ENCODE measurements at regions of chr11 and their contacts with region 1.

Region 1: DNA sequence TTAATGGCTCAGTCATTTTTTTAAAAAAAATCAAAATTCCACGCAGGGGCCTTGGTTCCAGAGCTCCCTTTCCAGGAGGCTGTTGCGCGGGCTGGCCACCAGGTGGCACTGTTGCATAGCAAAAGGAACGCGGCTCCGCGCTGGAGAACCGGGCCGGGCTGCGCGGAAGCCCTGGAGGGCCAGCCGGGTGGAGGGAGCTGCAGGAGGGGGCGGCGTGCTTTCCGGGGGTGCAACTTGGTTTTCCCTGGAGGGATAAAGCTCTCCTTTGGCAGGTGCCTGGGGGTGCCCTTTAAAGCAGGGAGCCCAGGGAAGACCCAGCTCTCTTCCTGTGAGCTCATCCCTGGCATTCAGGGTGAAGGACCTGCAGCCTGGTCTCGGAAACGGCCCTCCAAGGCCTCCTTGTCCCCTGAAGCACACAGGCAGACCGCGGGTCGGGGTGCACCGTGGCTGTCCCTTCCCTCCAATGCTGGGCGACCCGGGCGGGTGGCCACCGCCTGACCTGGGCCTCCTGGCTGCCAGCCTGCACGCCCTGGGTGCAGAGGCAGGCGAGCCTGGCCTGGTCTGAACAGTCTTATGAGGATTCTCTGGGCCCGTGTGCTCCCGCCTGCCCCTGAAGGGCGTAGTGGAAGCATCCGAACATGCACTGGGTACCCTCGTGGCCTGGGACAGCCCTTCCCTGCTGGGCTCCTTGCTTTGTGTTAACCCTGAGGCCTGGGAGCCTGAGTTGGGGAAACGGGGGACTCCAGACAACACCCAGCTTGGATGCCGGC is 23.4 kb downstream of the KRTAP5-5 start:
- H3K4me3 ChIP-seq: no peak overlapping the region
- H3K27ac ChIP-seq: no peak overlapping the region
- H3K4me1 ChIP-seq: no peaks in the 10 kb centered on the region
- CTCF ChIP-seq: peak; percentile 81

Region 2: GRCh38 chr11:1546536-1547400 is 106.2 kb before region 1 on chr11:
- CTCF ChIA-PET with region 1: interaction called, 16 read pairs
- POLR2A ChIA-PET with region 1: no interaction called
- H3K4me3 ChIP-seq: peak overlapping the region; percentile 36
- H3K27ac ChIP-seq: no peak overlapping the region
- H3K4me1 ChIP-seq: peaks cover 3% of the 10 kb centered on the region; the same call in 1 of the 2 replicates
- CTCF ChIP-seq: peak; percentile 46; the same call in 1 of the 2 replicates

Region 3: DNA sequence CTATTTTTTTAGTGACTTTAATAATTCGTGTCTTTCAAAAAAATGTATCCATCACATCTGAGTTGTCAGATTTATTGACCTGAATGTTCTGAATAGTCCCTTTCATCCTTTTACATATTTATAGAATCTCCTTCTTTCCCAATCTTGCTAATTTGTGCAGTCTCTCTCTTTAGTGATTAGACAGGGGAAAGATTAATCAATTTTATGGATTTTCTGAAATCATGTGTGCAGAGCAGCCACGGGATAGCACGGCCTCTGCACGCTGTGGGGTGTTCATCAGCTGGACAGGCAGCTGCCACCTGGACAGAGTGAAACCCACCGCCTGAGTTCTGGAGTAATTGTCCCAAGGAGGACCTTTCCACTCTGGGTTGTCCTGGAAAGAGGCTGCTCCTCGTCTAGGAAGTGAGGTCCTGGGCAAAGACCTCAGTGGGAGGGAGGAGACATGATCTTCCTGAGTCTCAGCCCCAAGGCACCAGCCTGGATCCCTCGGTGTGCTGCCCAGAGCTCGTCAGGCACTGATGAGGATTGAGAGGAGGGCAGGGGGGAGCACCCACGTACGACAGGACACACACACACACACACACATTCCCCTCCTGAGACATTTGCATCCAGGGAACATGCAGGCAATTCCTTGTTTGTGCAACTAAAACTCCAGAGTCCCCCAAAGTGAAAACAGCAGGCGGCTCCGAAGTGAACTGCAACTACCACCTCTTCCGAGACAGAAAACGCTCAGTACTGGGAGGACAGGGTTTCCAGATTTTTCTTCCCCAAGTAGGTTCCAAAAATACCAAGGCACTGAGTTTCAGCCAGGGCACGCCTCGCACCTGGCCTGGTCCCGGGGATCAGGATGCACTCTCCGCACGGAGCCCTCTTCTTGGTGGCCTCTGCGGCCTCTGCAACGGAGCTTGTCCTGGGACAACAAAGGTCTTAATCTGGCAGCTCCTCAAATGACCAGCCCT is 21.5 kb after region 1 on chr11:
- CTCF ChIA-PET with region 1: interaction called, 26 read pairs
- POLR2A ChIA-PET with region 1: interaction called, 8 read pairs
- H3K4me3 ChIP-seq: no peak overlapping the region
- H3K27ac ChIP-seq: no peak overlapping the region
- H3K4me1 ChIP-seq: no peaks in the 10 kb centered on the region
- CTCF ChIP-seq: no peak

Region 4: DNA sequence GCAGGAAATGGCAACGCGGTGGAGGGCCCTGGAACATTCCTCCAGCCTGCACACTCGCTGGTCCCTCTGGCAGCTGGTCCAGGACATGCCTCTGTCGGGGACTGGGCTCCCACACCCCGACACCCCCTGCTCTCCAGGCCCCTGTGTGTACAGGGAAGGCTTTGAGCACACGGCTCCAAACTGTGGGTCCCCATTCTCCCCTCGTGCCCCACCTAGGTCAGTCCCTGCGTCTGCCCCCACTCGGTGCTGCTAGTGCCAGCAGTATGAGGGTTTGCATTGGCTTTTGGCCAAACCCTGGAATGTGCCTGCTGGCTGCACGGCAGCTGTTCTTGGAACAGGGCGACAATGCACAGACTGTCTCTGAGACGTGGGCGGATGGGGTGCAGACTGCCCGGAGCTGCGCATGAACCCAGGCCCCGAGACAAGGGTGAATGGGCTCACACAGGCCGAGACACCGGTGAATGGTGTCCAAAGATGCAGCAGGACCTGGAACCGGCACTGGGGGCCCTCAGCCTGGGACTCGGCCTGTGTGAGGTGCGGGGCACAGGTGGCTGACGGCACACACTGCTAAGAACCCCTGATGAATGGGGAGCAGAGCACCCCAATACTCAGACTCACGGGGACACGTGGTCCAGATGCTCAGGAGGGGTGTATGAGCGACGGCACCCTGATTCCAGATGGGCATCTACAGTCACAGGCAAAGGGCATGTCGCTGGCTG is 174.3 kb after region 1 on chr11:
- CTCF ChIA-PET with region 1: interaction called, 116 read pairs
- POLR2A ChIA-PET with region 1: no interaction called
- H3K4me3 ChIP-seq: no peak overlapping the region
- H3K27ac ChIP-seq: no peak overlapping the region
- H3K4me1 ChIP-seq: no peaks in the 10 kb centered on the region
- CTCF ChIP-seq: peak; percentile 8; the same call in 1 of the 2 replicates

Region 5: GRCh38 chr11:1837171-1838076 is 184.5 kb after region 1 on chr11:
- CTCF ChIA-PET with region 1: interaction called, 116 read pairs
- POLR2A ChIA-PET with region 1: no interaction called
- H3K4me3 ChIP-seq: no peak overlapping the region
- H3K27ac ChIP-seq: no peak overlapping the region
- H3K4me1 ChIP-seq: no peaks in the 10 kb centered on the region
- CTCF ChIP-seq: peak; percentile 59

Region 6: DNA sequence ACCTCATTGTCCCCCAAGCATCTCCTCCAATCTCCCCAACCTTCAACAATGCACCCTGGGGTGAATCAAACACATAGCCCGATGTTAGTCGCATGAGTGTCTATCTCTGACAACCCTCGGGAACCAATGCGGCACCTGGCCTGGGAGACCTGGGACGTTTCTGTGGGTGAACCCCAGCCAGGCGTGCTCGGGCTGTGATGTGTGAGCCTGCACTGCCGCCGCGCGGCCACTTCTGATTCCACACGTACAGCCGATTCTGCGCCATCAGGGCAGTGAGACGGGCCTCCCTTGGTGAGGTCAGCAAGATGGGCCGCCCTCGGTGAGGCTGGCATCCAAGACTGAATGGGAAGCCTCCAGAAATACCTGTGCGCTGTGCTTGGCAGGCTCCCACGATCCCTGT is 349.9 kb after region 1 on chr11:
- CTCF ChIA-PET with region 1: interaction called, 27 read pairs
- POLR2A ChIA-PET with region 1: no interaction called
- H3K4me3 ChIP-seq: no peak overlapping the region
- H3K27ac ChIP-seq: no peak overlapping the region
- H3K4me1 ChIP-seq: no peaks in the 10 kb centered on the region
- CTCF ChIP-seq: no peak